ENCODE measurements at regions of chr14 and their contacts with region 1.

Region 1: DNA sequence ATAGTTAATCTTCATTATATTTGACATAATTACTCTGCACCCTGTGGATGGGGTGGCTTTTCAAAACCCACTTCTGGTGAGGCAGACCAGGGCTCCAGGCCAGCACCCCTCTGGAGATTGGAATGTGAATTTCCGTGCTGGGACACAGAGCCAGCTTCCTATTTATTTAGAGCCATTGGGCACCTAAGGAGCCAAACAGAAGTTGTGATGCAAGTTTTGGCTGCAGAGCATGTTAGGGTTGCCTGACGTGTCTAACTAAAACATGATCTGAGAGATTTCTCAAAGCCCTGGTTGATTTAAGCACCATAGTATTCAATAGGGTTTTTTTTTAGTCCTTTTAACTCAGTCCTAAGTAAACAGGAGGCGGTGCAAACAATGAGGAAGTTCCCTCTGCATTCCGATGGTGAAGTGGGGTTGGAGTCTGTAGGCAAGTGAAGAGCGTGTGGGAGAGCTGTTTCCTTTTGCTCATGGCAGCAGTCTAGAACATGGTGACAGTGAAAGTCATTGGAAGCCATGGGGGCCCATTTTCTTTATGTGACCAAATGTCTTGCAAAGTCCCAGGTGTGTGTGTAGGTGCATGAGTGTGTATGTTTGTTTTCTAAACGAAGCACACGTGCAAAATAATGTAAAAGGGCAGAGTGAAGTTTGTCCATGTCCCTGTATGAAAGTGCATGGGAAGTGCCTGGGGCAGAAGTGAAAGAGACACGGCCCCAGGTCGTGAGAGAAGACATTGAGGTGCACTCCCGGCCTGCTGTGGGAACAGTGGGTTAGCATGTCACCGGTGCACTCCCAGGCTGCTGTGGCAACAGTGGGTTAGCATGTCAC is 117.7 kb downstream of the PRKCH start:
- DNase-seq: peak; percentile 67
- H3K4me3 Mint-ChIP-seq: peak overlapping the region; percentile 69
- H3K27ac Mint-ChIP-seq: peak overlapping the region; percentile 92
- H3K4me1 Mint-ChIP-seq: peaks cover 91% of the 10 kb centered on the region
- H3K27me3 Mint-ChIP-seq: no peaks in the 10 kb centered on the region

Region 2: DNA sequence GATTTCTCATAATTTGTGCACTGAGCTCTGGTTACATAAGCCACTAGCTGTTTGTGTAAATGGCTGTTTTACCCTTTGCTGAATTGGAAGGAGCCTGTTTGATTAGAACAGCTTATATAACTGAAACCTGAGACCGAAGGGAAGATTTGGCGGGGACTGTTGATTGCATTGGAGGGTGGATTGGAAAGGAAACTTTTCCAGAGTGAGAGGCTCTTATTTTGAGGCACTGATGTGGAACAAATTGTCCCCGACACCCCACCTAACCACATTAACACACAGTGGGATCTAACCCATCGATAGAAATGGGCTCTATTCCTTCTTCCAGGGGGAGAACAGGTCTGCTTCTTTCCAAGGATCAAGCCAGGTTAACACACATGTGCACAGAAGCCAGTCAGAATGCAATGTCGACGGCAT is 209.6 kb before region 1 on chr14:
- CTCF ChIA-PET with region 1: no interaction called
- POLR2A ChIA-PET with region 1: no interaction called
- intact Hi-C with region 1: no loop called
- DNase-seq: no peak
- H3K4me3 Mint-ChIP-seq: no peak overlapping the region
- H3K27ac Mint-ChIP-seq: no peak overlapping the region
- H3K4me1 Mint-ChIP-seq: peaks cover 2% of the 10 kb centered on the region
- H3K27me3 Mint-ChIP-seq: peaks cover 20% of the 10 kb centered on the region

Region 3: DNA sequence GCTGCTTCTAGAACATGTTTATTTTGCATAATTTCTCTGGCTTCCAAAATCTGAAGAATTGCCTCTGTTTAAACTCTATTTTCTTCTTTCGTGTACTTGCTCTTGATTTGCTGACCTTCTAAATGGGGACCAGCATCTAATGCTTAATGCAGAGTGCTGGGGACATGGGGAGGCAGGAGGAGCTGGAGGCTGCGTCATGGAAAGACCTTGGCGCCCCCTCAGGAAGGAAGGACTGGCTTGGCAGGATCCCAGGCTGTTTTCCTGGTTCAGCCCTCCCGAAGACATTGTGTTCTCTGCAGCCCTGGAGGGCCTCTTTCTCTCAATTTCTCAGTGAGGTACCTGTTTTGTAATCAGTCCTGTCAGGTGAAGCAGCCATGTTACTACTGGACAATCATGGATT is 112.2 kb before region 1 on chr14:
- CTCF ChIA-PET with region 1: no interaction called
- POLR2A ChIA-PET with region 1: interaction called, 3 read pairs
- intact Hi-C with region 1: loop called (anchors 2 kb)
- DNase-seq: no peak
- H3K4me3 Mint-ChIP-seq: peak overlapping the region; percentile 99
- H3K27ac Mint-ChIP-seq: peak overlapping the region; percentile 93
- H3K4me1 Mint-ChIP-seq: peaks cover 64% of the 10 kb centered on the region
- H3K27me3 Mint-ChIP-seq: no peaks in the 10 kb centered on the region

Region 4: GRCh38 chr14:61406198-61406597 is 32.9 kb before region 1 on chr14:
- CTCF ChIA-PET with region 1: interaction called, 4 read pairs
- POLR2A ChIA-PET with region 1: no interaction called
- intact Hi-C with region 1: loop called (anchors 2 kb)
- DNase-seq: no peak
- H3K4me3 Mint-ChIP-seq: no peak overlapping the region
- H3K27ac Mint-ChIP-seq: peak overlapping the region; percentile 72
- H3K4me1 Mint-ChIP-seq: peaks cover 69% of the 10 kb centered on the region
- H3K27me3 Mint-ChIP-seq: no peaks in the 10 kb centered on the region

Region 5: DNA sequence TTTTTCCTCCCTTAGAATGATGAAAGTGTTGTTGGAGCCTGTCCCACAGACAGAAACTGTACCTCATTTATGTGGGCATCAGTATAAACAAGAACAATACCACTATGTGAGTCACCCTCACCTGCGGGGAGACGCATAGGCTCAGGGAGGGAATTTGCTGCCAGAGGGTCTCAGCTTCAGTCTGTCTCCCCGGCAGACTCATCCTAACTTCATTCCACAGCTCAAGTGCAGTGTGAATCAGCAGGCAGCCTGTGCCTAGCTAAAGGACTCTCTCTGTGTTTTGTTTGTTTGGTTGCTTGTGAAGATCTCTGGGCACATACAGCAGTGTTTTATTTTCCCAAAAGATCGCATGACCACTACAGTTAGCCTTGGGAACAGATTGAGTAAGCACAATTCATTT is 18.7 kb before region 1 on chr14:
- CTCF ChIA-PET with region 1: no interaction called
- POLR2A ChIA-PET with region 1: interaction called, 3 read pairs
- intact Hi-C with region 1: loop called (anchors 2 kb)
- DNase-seq: peak; percentile 44
- H3K4me3 Mint-ChIP-seq: no peak overlapping the region
- H3K27ac Mint-ChIP-seq: peak overlapping the region; percentile 73
- H3K4me1 Mint-ChIP-seq: peaks cover 28% of the 10 kb centered on the region
- H3K27me3 Mint-ChIP-seq: no peaks in the 10 kb centered on the region

Region 6: DNA sequence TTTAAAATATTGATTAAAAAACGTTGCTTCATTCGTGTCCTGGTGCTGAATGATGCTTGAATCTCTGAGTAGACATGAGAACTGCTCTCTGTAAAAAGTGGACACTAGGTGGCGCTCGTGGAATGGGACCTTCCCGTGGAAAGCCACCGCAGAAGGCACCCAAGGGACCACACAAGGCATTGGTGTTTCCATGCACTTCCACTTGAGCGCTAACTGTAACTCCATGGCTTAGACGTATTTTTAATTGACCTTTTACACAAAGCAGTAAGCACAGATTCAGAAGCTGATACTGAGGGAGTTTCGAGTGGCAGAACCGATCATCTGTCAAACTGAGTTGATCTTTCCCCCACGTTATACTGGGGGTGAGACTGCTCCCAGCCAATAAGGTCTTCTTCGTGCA is 17.6 kb after region 1 on chr14:
- CTCF ChIA-PET with region 1: interaction called, 5 read pairs
- POLR2A ChIA-PET with region 1: interaction called, 4 read pairs
- intact Hi-C with region 1: loop called (anchors 1 kb)
- DNase-seq: peak; percentile 87
- H3K4me3 Mint-ChIP-seq: no peak overlapping the region
- H3K27ac Mint-ChIP-seq: peak overlapping the region; percentile 60
- H3K4me1 Mint-ChIP-seq: peaks cover 81% of the 10 kb centered on the region
- H3K27me3 Mint-ChIP-seq: no peaks in the 10 kb centered on the region

Measured in activated CD4-positive, alpha-beta memory T cell treated with anti-CD3 and anti-CD28 coated beads for 36 hours (primary cell).